ENCODE measurements at regions of chr10 and their contacts with region 1.

Region 1: DNA sequence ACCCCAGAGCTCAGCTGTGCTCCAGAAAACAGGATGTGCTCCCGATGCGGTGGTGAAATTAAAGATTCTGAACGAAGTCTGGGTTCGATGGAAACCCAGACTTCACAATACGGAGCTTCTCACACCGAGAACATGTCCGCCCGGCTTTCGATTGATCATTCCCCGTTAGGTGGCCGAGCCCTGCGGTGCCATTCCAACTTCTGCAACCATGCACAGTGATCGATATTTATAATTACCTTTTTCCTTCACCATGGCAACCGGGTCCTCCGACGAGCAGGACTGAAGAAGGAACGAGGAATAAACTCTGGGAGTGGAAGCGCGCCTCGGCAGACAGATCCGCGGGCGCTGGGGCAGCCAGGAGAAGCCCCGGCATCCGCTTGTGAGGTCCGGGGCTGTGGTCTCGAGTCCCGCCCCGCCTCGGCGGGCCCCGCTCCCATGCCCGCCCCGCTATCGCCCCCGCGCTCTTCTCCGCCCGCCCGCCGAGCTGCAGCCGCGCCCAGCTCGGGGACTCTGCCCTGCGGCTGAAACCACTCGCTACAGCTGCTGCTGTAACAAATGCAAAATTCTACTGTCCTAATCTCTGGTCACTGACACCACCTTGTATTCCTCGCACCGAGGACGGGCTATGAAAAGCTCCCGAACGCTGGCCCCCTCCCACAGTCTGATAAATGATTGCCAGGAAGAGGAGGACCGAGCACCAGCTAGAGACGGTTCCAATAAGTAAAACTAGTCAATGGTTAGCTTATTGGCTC is 26.2 kb downstream of the ABLIM1 start:
- DNase-seq: no peak
- H3K4me3 ChIP-seq: peak overlapping the region; percentile 69 to 77
- H3K27ac ChIP-seq: peak overlapping the region; percentile 13 to 70
- H3K4me1 ChIP-seq: peaks cover 3 to 33% of the 10 kb centered on the region in 2 donors
- H3K27me3 ChIP-seq: no peaks in the 10 kb centered on the region
- CTCF ChIP-seq: no peak

Region 2: GRCh38 chr10:114471906-114472876 is 159.7 kb before region 1 on chr10:
- intact Hi-C with region 1: no loop called
- DNase-seq: no peak
- H3K4me3 ChIP-seq: no peak overlapping the region
- H3K27ac ChIP-seq: no peak overlapping the region
- H3K4me1 ChIP-seq: no peaks in the 10 kb centered on the region
- H3K27me3 ChIP-seq: no peaks in the 10 kb centered on the region
- CTCF ChIP-seq: no peak

Region 3: DNA sequence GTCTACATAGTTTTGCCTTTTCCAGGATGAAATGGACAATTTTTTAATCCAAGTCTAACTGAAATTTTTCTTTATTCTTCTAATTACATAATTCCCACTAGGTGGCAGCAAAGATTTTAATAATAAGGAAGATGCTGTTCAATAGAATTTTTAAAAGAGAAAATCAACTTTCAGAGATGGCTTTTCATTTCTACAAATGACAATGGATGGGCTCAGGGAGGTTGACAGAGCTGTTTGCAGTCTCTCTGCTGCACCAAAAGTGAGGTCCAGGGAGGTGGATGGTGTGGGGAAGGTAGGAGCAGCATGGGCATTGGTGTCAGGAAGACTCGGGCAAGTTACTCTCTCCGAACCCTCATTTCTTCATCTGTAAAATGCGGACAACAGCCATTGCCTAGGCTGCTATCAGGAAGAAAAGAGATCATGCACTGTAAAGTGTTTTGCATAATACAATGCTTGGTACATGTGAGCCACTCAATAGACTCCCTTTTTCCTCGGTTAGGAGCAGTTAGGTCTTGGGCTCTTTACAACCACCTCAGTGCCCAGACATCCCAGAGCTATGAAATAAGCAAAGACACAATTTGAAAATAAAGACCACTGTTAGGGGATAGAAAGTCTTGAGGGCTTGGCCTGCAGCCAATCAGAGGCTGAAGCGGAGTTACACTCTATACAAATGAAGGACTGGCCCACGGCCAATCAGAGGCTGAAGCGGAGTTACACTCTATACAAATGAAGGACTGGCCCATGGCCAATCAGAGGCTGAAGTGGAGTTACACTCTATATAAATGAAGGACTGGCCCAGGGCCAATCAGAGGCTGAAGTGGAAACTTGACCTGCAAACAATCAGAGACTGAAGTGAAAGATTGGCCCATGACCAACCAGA is 80.8 kb before region 1 on chr10:
- intact Hi-C with region 1: loop called (anchors 5 kb)
- DNase-seq: no peak
- H3K4me3 ChIP-seq: peak overlapping the region; percentile 13 to 46
- H3K27ac ChIP-seq: no peak overlapping the region
- H3K4me1 ChIP-seq: peaks cover 0 to 2% of the 10 kb centered on the region in 2 donors
- H3K27me3 ChIP-seq: no peaks in the 10 kb centered on the region
- CTCF ChIP-seq: peak; percentile 36 to 68 (median 45)

Region 4: DNA sequence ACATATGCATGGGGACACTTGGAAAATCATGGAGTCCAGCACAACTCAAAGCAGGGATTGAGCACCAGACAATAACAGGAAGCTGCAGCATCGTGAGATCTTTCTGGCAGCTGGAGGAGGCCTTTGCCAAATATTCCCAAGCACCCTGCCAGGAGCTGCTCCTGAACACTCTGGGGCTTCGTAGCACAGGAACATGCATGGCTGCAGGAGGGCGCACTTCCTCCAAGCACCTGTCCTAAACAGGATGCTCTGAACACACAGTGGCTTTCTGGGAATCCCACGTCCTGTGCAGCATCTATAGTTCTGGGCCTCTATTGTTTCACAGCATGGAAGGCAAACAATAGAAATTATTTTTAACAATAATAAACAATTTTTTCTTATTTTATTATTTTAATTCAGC is 22.1 kb after region 1 on chr10:
- intact Hi-C with region 1: no loop called
- DNase-seq: no peak
- H3K4me3 ChIP-seq: no peak overlapping the region
- H3K27ac ChIP-seq: no peak overlapping the region
- H3K4me1 ChIP-seq: no peaks in the 10 kb centered on the region
- H3K27me3 ChIP-seq: no peaks in the 10 kb centered on the region
- CTCF ChIP-seq: no peak

Region 5: DNA sequence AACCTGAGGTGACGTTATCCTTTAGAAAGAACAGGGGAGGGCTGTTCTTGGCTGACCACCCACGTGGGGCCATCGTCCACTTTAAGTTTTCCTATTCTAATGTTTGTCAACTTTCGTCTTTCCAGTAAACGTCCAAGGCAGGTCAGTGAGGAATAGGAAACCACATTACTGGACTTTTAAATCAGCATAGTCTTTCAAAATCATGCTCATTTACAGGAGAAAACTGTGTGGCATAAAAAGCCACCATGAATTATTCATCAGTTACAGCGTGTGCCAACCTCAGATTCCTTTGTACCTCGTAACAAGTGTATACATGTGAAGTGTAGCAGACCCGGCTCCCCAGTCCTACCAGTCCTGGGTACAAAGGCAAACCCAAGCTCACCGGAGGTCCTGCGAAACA is 51.3 kb after region 1 on chr10:
- intact Hi-C with region 1: loop called (anchors 2 kb)
- DNase-seq: peak in 1 of 2 donors; percentile 66
- H3K4me3 ChIP-seq: peak overlapping the region; percentile 27 to 44
- H3K27ac ChIP-seq: peak overlapping the region; percentile 38 to 76
- H3K4me1 ChIP-seq: peaks cover 0 to 19% of the 10 kb centered on the region in 2 donors
- H3K27me3 ChIP-seq: no peaks in the 10 kb centered on the region
- CTCF ChIP-seq: no peak

Region 6: DNA sequence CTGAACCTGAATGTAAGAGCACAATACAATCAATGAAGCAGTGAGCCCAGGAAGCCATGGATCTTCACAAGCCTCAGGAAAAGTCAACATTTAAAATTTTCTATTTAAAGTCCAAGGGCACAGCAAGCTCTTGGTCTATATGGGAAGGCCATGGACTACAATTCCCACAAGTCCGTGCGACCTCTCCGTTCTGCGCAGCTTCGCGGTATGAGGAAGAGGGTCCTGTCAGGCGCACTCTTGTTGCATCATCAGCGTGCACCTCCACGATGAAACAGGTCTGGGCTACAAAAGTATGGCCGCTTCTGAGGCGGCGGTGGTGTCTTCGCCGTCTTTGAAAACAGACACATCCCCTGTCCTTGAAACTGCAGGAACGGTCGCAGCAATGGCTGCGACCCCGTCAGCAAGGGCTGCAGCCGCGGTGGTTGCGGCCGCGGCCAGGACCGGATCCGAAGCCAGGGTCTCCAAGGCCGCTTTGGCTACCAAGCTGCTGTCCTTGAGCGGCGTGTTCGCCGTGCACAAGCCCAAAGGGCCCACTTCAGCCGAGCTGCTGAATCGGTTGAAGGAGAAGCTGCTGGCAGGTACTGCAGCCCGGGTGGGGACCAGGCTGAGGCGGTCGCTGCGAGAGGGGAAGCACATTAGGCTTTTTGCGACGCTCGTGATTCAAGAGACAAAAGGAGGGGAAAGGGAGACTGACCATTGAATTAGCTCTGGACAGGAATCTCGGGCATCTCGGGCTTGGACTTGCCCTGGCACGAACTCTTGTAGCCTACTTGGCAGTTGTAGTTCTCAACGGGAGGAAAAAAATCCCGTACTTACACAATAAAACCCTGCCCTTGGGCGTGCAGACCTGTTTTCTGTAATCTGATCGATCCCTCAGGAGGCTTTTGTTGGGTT is 306.4 kb after region 1 on chr10 and contains the start of gene TRUB1:
- intact Hi-C with region 1: loop called (anchors 10 kb)
- DNase-seq: peak; percentile 80 to 97
- H3K4me3 ChIP-seq: peak within 1 kb of the TSS; percentile 88 to 97
- H3K27ac ChIP-seq: peak within 1 kb of the TSS; percentile 76 to 81
- H3K4me1 ChIP-seq: peaks cover 3 to 8% of the 10 kb centered on the region in 2 donors
- H3K27me3 ChIP-seq: no peaks in the 10 kb centered on the region
- CTCF ChIP-seq: no peak
- total RNA-seq, gene TRUB1: 5.4 TPM

Measured in ascending aorta (tissue), 2 donors.